Activated CD4-positive, alpha-beta T cell treated with anti-CD3 and anti-CD28 coated beads for 36 hours (primary cell): ENCODE measurements at regions of chr18 and their contacts with region 1.

Region 1: GRCh38 chr18:12236934-12237832 is 17.0 kb upstream of the CIDEA start:
- DNase-seq: peak; percentile 86
- ATAC-seq: peak; percentile 98
- H3K4me3 Mint-ChIP-seq: no peak overlapping the region
- H3K27ac Mint-ChIP-seq: no peak overlapping the region
- H3K4me1 Mint-ChIP-seq: no peaks in the 10 kb centered on the region
- H3K27me3 Mint-ChIP-seq: peaks cover 36% of the 10 kb centered on the region

Region 2: DNA sequence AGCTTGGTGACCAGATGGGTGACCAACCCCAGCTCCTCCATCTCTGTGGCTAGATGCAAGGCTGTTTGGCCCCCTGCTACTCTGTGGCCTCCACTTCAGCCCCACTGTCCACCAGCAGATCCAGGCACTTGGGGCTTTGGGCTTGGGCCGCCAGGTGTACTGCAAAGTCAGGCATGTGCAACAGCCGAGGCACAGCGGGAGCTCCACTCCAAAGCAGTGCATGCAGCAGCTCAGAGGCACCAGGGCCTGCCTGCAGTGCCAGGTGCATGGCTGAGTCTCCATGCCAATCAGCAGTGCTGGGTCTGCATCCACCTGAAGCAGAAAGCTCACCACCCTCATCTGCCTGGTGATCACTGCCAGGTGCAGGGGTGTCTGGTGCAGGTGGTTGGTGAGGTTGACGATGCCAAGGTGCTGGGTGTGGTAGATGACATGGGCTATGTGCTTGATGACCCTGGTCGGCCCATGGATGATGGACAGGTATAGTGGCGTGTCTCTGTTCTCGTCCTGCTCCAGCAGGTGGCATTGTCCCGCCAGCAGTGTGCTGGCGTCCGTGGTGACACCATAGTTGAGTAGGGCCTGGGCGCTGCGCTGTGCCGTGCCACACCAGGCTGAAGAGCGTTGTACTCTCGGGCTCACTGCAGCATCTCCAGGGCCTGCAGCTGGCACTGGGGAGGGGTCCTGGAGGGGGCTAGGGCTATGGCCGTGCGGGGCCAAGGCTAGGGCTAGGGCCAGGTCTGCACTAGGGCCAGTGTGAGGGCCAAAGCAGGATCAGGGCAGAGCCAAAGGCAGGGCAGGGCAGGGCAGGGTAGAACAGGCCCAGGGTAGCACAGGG is 144.6 kb before region 1 on chr18:
- CTCF ChIA-PET with region 1: no interaction called
- POLR2A ChIA-PET with region 1: no interaction called
- intact Hi-C with region 1: loop called (anchors 1 to 10 kb)
- DNase-seq: peak; percentile 31
- ATAC-seq: peak; percentile 63
- H3K4me3 Mint-ChIP-seq: no peak overlapping the region
- H3K27ac Mint-ChIP-seq: no peak overlapping the region
- H3K4me1 Mint-ChIP-seq: no peaks in the 10 kb centered on the region
- H3K27me3 Mint-ChIP-seq: peaks cover 6% of the 10 kb centered on the region